Uterus (tissue), 4 donors: ENCODE measurements at regions of chr3 and their contacts with region 1.

Region 1: GRCh38 chr3:73427048-73427706 is 197.6 kb downstream of the PDZRN3 start:
- DNase-seq: no peak
- H3K4me3 ChIP-seq: no peak overlapping the region
- H3K27ac ChIP-seq: peak overlapping the region; percentile 53 to 61
- H3K4me1 ChIP-seq: peaks cover 0 to 17% of the 10 kb centered on the region in 2 donors
- H3K27me3 ChIP-seq: no peaks in the 10 kb centered on the region
- CTCF ChIP-seq: no peak
- POLR2A ChIP-seq: no peak

Region 2: DNA sequence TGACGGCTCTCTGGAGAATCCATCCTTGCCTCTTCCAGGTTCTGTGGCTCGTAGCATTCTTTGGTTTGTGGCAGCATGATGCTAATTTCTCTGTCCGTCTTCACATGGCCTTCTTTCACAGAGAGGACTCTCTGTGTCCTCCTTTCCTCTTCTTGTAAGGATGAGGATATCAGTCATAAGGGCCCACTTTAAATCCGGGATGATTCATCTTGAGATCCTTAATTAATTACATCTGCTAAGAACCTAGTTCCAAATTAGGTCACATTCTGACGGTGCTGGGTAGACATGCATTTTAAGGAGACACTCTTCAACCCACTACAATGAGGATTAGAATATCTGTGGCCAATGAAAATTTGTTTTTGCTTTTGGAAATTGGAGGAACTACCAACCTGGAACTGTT is 555.0 kb before region 1 on chr3:
- intact Hi-C with region 1: no loop called
- DNase-seq: no peak
- H3K4me3 ChIP-seq: no peak overlapping the region
- H3K27ac ChIP-seq: no peak overlapping the region
- H3K4me1 ChIP-seq: no peaks in the 10 kb centered on the region
- H3K27me3 ChIP-seq: no peaks in the 10 kb centered on the region
- CTCF ChIP-seq: no peak
- POLR2A ChIP-seq: no peak

Region 3: GRCh38 chr3:73100741-73101559 is 326.2 kb before region 1 on chr3:
- intact Hi-C with region 1: loop called (anchors 5 kb)
- DNase-seq: peak; percentile 85 to 93
- H3K4me3 ChIP-seq: no peak overlapping the region
- H3K27ac ChIP-seq: no peak overlapping the region
- H3K4me1 ChIP-seq: no peaks in the 10 kb centered on the region
- H3K27me3 ChIP-seq: no peaks in the 10 kb centered on the region
- CTCF ChIP-seq: peak; percentile 89 to 96 (median 91)
- POLR2A ChIP-seq: no peak

Region 4: DNA sequence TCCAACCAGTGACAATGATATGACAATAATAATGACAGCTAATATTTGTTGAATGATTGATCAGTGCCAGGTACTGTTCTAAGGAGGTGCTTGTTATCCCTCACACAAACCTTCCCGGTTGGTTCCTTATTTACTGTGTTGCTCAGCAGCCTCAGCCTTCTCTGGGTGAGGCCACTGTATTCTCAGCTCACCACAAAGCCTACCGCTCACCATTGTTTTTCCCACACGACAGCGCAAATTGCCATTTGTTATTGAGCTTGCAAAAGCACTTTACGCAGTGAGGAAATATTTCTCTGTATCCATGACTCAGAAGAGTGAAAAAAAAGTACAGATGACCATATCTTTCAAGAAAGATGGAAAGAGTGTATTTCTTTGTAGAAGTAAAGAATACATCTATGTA is 247.1 kb after region 1 on chr3:
- intact Hi-C with region 1: no loop called
- DNase-seq: no peak
- H3K4me3 ChIP-seq: no peak overlapping the region
- H3K27ac ChIP-seq: no peak overlapping the region
- H3K4me1 ChIP-seq: no peaks in the 10 kb centered on the region
- H3K27me3 ChIP-seq: no peaks in the 10 kb centered on the region
- CTCF ChIP-seq: no peak
- POLR2A ChIP-seq: no peak